ENCODE measurements at regions of chr22 and their contacts with region 1.

Region 1: GRCh38 chr22:37887610-37888378 is 18.3 kb upstream of the MICALL1 start:
- DNase-seq: peak in 1 of 2 experiments; percentile 36
- ATAC-seq: peak; percentile 71 to 83; a peak in 3 of 6 replicates
- H3K4me3 ChIP-seq: no peak overlapping the region
- H3K27ac ChIP-seq: no peak overlapping the region
- H3K4me1 ChIP-seq: no peaks in the 10 kb centered on the region
- CTCF ChIP-seq: peak; percentile 20; the same call in 1 of the 3 replicates
- EP300 ChIP-seq: no peak
- POLR2A ChIP-seq: no peak
- RAD21 ChIP-seq: peak; percentile 12 to 21; a peak in 1 of 5 replicates

Region 2: DNA sequence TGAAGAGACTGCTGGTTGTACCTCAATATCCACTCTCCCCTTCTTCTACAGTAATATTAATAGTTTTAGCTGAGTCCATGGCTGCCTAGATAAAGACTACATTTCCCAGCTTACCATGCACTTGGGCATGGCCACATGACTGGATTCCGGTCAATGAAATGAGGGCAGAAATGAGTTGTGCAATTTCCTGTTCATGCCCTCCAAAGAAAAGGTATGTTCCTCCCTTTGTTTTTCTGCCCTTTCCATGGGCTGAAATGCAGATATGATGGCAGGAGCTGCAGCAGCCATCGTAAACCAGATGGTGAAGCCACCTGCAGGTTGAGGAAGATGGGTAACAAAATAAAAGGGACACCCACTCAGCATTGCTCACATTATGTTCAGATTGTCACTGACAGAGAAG is 445.3 kb before region 1 on chr22:
- CTCF ChIA-PET with region 1: no interaction called
- POLR2A ChIA-PET with region 1: no interaction called
- DNase-seq: peak in 1 of 2 experiments; percentile 49
- ATAC-seq: peak; percentile 54 to 77; a peak in 3 of 6 replicates
- H3K4me3 ChIP-seq: no peak overlapping the region
- H3K27ac ChIP-seq: peak overlapping the region; percentile 47 to 68
- H3K4me1 ChIP-seq: peaks cover 11% of the 10 kb centered on the region; the same call in 1 of the 3 replicates
- CTCF ChIP-seq: no peak
- EP300 ChIP-seq: no peak
- POLR2A ChIP-seq: no peak
- RAD21 ChIP-seq: no peak

Region 3: GRCh38 chr22:37905534-37906363 is 18.0 kb after region 1 on chr22 and contains the start of gene MICALL1:
- CTCF ChIA-PET with region 1: interaction called, 11 read pairs
- POLR2A ChIA-PET with region 1: no interaction called
- DNase-seq: peak; percentile 51 to 64
- ATAC-seq: peak; percentile 79 to 84
- H3K4me3 ChIP-seq: peak within 1 kb of the TSS; percentile 95
- H3K27ac ChIP-seq: peak within 1 kb of the TSS; percentile 99
- H3K4me1 ChIP-seq: peaks cover 28% of the 10 kb centered on the region
- CTCF ChIP-seq: peak; percentile 52
- EP300 ChIP-seq: no peak
- POLR2A ChIP-seq: peak; percentile 28; the same call in 1 of the 2 replicates
- RAD21 ChIP-seq: no peak; a peak in 1 of 5 replicates
- polyA plus RNA-seq, gene MICALL1: 10.4 and 11.1 TPM in 2 replicates